Activated T-helper 1 cell treated with anti-CD3 and anti-CD28 coated beads, Interleukin-12 subunit alpha, Interleukin-12 subunit beta, Interleukin-2, Interleukin-4 antibody, amounts not matched to agents 30 ng/mL and 10 ng/mL and 1 ng/mL, durations not matched to agents 14 hours and 24 hours and 36 hours (primary cell): ENCODE measurements at regions of chr16 and their contacts with region 1.

Region 1: DNA sequence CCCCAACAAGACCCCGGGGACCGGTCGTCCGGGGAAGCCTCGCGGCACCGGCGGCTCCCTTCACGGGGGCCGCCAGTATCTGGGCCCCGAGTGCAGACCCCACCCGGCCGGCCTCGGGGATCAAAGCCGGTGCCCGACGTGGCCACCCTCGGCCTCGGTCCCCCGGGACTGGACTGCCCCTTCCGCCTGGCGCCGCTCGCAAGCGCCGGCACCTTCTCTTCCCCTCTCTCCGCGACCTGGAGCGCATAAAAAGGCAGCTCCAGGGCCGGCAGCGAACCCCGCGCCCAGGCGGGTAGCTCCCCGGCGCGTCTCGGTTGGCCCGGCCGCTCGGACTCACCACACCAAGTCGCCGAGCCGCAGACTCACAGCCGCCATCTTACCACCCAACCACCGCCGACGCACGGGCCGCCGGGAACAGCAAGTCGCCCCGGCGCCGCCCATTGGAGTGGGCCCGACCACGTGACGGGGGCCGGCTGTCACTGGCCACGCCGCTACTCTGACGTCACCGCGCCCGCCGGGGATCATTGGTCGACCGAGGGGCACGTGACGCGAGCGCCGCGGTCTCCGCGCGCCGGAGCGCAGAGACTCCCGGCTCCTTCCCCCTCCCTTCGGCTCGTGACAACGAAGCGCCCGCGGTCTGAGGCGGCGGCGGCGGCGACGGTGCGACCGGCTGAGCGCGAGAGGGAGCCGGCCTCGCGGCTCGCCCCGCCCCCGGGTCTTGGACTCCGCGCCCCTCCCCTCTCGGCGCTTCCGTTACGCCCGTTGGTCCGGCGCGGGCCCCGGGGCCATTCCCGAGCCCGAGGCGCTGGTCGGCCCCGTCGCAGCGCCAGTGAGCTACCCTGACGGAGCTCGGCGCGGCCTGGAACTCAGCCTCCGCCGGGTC is at the starts of genes GLYR1 and UBN1:
- DNase-seq: peak; percentile 99
- H3K4me3 Mint-ChIP-seq: peak within 1 kb of the TSS; percentile 91
- H3K27ac Mint-ChIP-seq: peak within 1 kb of the TSS; percentile 80
- H3K4me1 Mint-ChIP-seq: peaks cover 56% of the 10 kb centered on the region
- H3K27me3 Mint-ChIP-seq: no peaks in the 10 kb centered on the region
- total RNA-seq, gene GLYR1: 119 and 120 TPM in 2 replicates
- total RNA-seq, gene UBN1: 39.6 and 42.6 TPM in 2 replicates

Region 2: DNA sequence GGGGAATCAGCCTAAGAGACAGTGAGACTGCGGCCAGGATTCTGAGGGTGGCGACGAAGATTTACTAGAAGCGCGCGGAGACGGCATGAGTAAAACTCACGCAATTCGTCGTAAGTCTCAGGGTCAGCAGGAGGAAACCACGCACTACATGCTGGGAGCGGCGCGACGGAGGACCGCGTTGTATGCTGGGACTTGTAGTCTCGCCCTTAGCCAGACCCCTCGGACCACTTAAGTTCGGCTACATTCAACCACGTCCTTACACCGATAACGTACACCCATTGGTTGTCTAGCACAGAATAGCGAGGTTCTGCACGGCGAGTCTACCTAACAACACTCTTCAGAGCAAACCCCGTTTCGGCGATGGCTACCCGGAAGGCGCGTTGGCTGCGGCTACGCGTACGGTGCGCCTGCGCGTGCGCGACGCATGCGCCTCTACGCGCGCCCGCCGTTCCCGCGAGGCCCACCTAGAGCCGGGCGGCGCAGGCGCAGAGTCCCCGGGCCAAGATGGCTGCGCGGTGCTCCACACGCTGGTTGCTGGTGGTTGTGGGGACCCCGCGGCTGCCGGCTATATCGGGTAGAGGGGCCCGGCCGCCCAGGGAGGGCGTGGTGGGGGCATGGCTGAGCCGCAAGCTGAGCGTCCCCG is 421.6 kb before region 1 on chr16 and contains the start of gene DNAJA3:
- intact Hi-C with region 1: loop called (anchors 5 kb)
- DNase-seq: peak; percentile 91
- H3K4me3 Mint-ChIP-seq: peak within 1 kb of the TSS; percentile 98
- H3K27ac Mint-ChIP-seq: peak within 1 kb of the TSS; percentile 100
- H3K4me1 Mint-ChIP-seq: peaks cover 31% of the 10 kb centered on the region
- H3K27me3 Mint-ChIP-seq: peaks cover 3% of the 10 kb centered on the region
- total RNA-seq, gene DNAJA3: 103 and 107 TPM in 2 replicates

Region 3: DNA sequence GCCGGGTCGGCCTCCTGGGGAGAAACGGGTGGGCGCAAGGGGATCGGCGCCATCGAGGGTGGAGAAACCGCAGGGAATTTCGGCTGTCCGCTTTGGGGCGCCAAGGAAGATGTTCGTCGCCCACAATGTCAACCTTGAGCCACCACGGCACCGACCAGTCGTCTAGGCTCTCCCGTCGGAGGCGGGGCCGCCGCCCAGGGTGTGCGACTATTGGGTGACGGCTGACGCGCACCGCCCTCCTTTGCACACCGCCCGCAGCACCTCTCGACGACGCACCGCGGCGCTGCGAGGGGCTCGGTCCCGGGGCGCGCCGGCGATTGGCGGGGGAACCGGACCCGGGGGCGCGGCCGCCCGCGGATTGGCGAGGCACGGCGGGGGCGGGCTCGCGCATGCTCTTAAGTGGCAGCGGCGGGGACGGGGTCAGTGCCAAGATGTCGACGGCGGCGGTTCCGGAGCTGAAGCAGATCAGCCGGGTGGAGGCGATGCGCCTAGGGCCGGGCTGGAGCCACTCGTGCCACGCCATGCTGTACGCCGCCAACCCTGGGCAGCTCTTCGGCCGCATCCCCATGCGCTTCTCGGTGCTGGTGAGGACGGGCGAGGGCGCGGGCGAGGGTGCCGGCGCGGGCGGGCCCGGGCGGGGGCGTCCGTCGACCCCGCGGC is 153.7 kb before region 1 on chr16 and contains the start of gene NUDT16L1:
- intact Hi-C with region 1: loop called (anchors 2 kb)
- DNase-seq: peak; percentile 98
- H3K4me3 Mint-ChIP-seq: peak within 1 kb of the TSS; percentile 86
- H3K27ac Mint-ChIP-seq: peak within 1 kb of the TSS; percentile 84
- H3K4me1 Mint-ChIP-seq: no peaks in the 10 kb centered on the region
- H3K27me3 Mint-ChIP-seq: no peaks in the 10 kb centered on the region
- total RNA-seq, gene NUDT16L1: 39.9 and 41.9 TPM in 2 replicates

Region 4: DNA sequence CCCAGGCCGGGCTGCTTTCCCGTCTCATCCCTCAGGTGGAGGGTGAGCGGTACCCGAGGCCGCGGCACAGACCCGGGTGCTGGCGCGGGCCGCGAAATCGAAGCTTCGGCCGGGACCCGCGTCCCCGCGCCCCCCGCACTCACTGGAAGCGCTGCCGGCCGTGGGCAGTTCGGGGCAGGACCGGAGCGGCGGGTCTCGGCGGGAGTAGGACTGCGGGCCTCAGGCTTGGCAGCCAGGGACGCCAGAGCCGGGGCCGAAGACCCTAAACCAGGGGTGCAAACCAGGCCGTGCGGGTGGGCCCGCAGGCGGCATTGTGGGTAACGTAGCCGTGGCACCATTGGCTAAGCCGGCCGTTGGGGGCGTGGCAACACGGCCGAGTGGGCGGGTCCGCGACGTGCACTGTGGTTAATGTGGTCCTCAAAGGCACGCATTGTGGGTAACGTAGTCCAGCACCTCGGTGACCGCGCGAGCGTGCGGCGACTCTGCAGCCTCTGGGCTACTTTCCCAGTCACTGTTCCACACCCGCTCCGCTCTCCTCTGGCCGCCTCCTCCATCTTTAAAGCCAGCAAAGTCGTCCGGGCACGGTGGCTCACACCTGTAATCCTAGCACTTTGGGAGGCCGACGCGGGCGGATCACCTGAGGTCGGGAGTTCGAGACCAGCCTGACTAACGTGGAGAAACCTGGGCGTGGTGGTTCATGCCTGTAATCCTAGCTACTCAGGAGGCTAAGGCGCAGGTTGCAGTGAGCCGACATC is 80.1 kb before region 1 on chr16 and contains the start of gene ZNF500:
- intact Hi-C with region 1: loop called (anchors 1 kb)
- DNase-seq: peak; percentile 96
- H3K4me3 Mint-ChIP-seq: peak within 1 kb of the TSS; percentile 95
- H3K27ac Mint-ChIP-seq: peak within 1 kb of the TSS; percentile 87
- H3K4me1 Mint-ChIP-seq: peaks cover 20% of the 10 kb centered on the region
- H3K27me3 Mint-ChIP-seq: no peaks in the 10 kb centered on the region
- total RNA-seq, gene ZNF500: 16.6 and 17.4 TPM in 2 replicates

Region 5: GRCh38 chr16:4957720-4958509 is 110.8 kb after region 1 on chr16 and contains the start of gene SEC14L5:
- intact Hi-C with region 1: loop called (anchors 1 kb)
- DNase-seq: peak; percentile 90
- H3K4me3 Mint-ChIP-seq: peak within 1 kb of the TSS; percentile 85
- H3K27ac Mint-ChIP-seq: peak within 1 kb of the TSS; percentile 26
- H3K4me1 Mint-ChIP-seq: peaks cover 22% of the 10 kb centered on the region
- H3K27me3 Mint-ChIP-seq: peaks cover 21% of the 10 kb centered on the region
- total RNA-seq, gene SEC14L5: not detected in 2 replicates

Region 6: DNA sequence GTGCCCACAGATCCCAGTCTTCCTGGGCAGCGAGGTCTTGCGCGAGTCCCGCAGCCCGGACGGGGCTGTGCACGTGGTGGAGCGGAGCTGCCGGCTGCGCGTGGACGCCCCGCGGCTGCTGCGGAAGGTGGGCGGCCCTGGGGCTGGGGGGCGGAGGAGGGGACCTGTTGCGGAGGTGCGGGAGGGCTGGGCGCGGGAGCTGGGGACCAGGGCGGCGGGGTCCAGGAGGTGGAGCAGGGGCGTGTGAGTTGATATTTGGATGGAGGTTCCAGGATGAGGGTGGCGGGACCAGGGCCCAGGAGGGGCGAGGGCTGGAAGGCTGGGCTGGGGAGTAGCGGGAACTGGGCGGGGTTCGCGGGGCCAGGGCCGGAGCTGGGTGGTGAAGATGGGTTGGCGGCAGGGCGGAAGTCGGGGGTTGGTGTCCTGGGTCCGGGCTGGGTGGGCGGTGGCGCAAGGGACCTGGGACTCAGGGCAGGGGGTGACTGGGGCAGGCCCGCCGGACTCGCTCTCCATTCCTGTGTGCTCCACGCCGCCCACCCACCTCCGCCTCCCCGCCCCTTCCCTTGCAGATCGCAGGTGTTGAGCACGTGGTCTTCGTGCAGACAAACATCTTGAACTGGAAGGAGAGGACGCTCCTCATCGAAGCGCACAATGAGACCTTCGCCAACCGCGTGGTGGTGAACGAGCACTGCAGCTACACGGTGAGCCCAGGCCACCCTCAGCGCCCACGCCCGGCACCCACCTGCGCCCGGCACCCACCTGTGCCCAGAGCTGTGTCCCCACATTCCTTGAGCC is 140.6 kb after region 1 on chr16:
- intact Hi-C with region 1: no loop called
- DNase-seq: no peak
- H3K4me3 Mint-ChIP-seq: no peak overlapping the region
- H3K27ac Mint-ChIP-seq: no peak overlapping the region
- H3K4me1 Mint-ChIP-seq: no peaks in the 10 kb centered on the region
- H3K27me3 Mint-ChIP-seq: peaks cover 41% of the 10 kb centered on the region

Region 7: GRCh38 chr16:5071681-5072333 is 224.7 kb after region 1 on chr16 and contains the start of gene ALG1:
- intact Hi-C with region 1: loop called (anchors 5 kb)
- DNase-seq: peak; percentile 88
- H3K4me3 Mint-ChIP-seq: peak within 1 kb of the TSS; percentile 93
- H3K27ac Mint-ChIP-seq: peak within 1 kb of the TSS; percentile 97
- H3K4me1 Mint-ChIP-seq: peaks cover 24% of the 10 kb centered on the region
- H3K27me3 Mint-ChIP-seq: peaks cover 6% of the 10 kb centered on the region
- total RNA-seq, gene ALG1: 40.0 and 41.4 TPM in 2 replicates